Astrocyte of the spinal cord (primary cell): ENCODE measurements at regions of chr6 and their contacts with region 1.

Region 1: DNA sequence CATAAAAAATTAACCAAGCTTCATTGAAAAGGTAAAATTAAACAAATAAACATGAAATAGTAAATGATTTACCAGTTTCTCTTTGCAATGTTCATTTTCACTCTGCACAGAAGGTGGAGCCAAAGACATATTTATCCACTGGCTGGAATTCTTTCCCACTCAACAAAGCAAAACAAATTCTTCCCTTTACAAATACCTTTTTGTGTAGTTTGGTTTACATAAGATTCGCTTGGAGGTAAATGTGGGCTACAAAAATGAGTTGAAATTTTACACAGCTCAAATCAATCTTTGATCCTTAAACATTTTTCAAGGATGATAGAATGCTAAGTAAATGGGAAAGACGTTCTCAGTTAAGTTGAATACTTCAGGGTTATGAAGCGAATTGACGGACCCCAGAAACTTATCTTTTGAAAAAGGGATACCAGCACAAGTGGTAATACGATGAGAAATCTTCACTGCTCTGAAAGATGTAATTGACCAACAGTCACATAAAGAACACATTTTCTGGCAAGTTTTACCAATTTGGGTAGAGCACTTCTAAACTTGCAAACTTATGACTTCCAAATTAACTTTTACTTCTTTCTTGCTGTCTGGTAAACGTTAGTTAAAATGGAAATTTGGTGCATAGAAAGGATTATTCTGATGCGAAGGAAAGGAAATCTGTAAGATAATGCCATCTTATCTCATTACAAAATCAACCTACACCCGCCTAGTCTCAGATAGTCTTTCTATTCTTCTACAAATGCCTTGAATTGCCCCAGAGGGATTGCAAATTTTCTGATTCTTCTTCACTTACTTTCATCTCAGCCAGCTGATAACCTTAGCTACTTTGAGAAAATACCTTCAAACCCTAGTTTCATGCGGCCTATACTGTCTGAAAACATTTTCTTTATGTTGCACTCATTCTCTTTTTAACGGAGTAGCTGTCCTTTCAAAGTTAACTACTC is 4.7 kb upstream of the GJA1 start:
- DNase-seq: peak; percentile 68
- H3K4me3 ChIP-seq: no peak overlapping the region
- CTCF ChIP-seq: peak; percentile 65

Region 2: DNA sequence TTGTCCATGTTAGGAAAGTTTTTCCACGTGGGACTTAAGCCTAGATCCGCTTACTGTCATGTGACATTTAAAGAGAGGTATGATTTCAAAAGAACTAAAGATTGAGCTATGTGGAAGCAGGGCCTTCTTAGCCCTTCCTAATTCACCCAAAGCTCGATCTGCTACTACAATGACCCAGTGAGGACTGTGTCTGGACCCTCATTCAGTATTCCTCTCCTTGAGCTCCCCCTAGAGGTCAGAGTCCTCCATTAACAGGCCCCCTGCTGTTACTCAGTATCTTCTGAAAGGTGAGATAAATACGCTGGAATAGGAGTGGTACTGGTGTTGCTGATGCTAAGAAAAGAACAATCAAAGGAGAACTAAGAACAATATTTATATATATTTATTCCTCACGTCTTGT is 418.7 kb after region 1 on chr6:
- in situ Hi-C with region 1: loop called (anchors 10 kb)
- DNase-seq: peak; percentile 76
- H3K4me3 ChIP-seq: no peak overlapping the region
- CTCF ChIP-seq: peak; percentile 66